Activated CD4-positive, alpha-beta memory T cell treated with anti-CD3 and anti-CD28 coated beads, Interleukin-2, amount 10 ng/mL, durations not matched to agents 7 days and 5 days (primary cell): ENCODE measurements at regions of chr17 and their contacts with region 1.

Region 1: DNA sequence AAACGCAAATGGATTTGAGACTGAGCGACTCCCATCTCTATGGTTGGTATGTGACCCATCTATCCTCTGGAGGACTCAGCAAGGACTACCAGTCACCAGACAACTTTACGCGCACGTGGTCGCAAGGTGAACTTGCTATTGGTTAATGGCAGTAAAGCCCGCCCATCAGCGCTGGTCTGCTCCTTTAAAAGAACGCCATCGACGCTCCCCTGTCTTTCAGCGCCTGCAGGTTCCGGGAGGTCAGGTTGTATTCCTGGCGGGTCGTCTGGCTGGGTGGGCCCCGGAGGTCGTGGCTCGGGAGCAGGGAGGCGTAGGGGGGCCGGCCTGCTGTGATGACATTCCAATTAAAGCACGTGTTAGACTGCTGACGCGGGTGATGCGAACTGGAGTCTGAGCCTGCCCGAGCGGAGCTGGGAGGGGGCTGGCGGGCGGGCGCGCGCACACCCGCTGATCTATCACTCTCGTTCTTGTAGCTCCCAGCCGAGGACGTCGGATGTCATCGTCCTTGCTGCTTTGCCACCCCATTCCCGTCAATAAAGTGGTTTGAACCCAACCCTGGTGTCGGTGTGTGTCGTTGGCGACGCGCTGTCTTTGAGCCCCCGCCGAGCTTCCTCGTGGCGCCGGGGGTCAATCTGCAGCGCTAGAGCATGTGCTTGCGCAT is 15.9 kb upstream of the ERN1 start:
- DNase-seq: peak; percentile 96
- H3K4me3 Mint-ChIP-seq: no peak overlapping the region
- H3K27ac Mint-ChIP-seq: no peak overlapping the region
- H3K4me1 Mint-ChIP-seq: peaks cover 25% of the 10 kb centered on the region
- H3K27me3 Mint-ChIP-seq: no peaks in the 10 kb centered on the region

Region 2: GRCh38 chr17:63919311-63919723 is 226.6 kb before region 1 on chr17:
- CTCF ChIA-PET with region 1: interaction called, 4 read pairs
- POLR2A ChIA-PET with region 1: interaction called, 10 read pairs
- DNase-seq: peak; percentile 79
- H3K4me3 Mint-ChIP-seq: no peak overlapping the region
- H3K27ac Mint-ChIP-seq: no peak overlapping the region
- H3K4me1 Mint-ChIP-seq: peaks cover 8% of the 10 kb centered on the region
- H3K27me3 Mint-ChIP-seq: peaks cover 19% of the 10 kb centered on the region

Region 3: GRCh38 chr17:64020056-64020766 is 125.7 kb before region 1 on chr17 and contains the start of gene ICAM2:
- CTCF ChIA-PET with region 1: interaction called, 14 read pairs
- POLR2A ChIA-PET with region 1: interaction called, 54 read pairs
- DNase-seq: peak; percentile 95
- H3K4me3 Mint-ChIP-seq: peak within 1 kb of the TSS; percentile 99
- H3K27ac Mint-ChIP-seq: peak within 1 kb of the TSS; percentile 100
- H3K4me1 Mint-ChIP-seq: peaks cover 66% of the 10 kb centered on the region
- H3K27me3 Mint-ChIP-seq: no peaks in the 10 kb centered on the region
- total RNA-seq, gene ICAM2: 118 to 122 TPM

Region 4: GRCh38 chr17:64081802-64082799 is 63.8 kb before region 1 on chr17:
- CTCF ChIA-PET with region 1: no interaction called
- POLR2A ChIA-PET with region 1: interaction called, 31 read pairs
- DNase-seq: peak; percentile 84
- H3K4me3 Mint-ChIP-seq: peak overlapping the region; percentile 54
- H3K27ac Mint-ChIP-seq: no peak overlapping the region
- H3K4me1 Mint-ChIP-seq: peaks cover 31% of the 10 kb centered on the region
- H3K27me3 Mint-ChIP-seq: no peaks in the 10 kb centered on the region

Region 5: DNA sequence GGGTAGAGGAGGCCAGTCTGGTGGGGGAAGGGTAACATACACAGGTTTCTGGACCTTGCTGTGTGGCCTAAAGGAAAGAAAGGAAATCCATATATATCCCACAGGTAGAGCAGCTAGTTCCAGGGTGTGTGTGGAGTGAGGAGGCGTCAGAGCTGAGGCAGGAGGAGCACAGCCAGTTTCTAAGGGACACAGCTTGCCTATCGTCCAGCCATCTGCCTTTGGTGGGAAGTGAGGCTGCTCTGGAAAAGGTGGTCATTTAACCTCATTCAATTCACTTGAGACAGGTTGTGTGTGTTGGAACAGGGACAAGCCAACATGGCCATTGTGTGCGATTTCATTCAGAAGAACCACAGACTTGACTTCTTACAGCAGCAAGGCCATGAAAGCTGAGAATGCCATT is 21.0 kb after region 1 on chr17:
- CTCF ChIA-PET with region 1: no interaction called
- POLR2A ChIA-PET with region 1: interaction called, 11 read pairs
- DNase-seq: no peak
- H3K4me3 Mint-ChIP-seq: no peak overlapping the region
- H3K27ac Mint-ChIP-seq: no peak overlapping the region
- H3K4me1 Mint-ChIP-seq: no peaks in the 10 kb centered on the region
- H3K27me3 Mint-ChIP-seq: no peaks in the 10 kb centered on the region

Region 6: GRCh38 chr17:64270885-64271284 is 125.0 kb after region 1 on chr17:
- CTCF ChIA-PET with region 1: interaction called, 3 read pairs
- POLR2A ChIA-PET with region 1: interaction called, 19 read pairs
- DNase-seq: no peak
- H3K4me3 Mint-ChIP-seq: peak overlapping the region; percentile 24
- H3K27ac Mint-ChIP-seq: peak overlapping the region; percentile 72
- H3K4me1 Mint-ChIP-seq: peaks cover 27% of the 10 kb centered on the region
- H3K27me3 Mint-ChIP-seq: peaks cover 23% of the 10 kb centered on the region